Activated T-helper 2 cell treated with anti-CD3 and anti-CD28 coated beads, Interferon-gamma antibody, Interleukin-2, Interleukin-4, amounts not matched to agents 10 μg/mL and 5 μg/mL and 100 μg/mL, durations not matched to agents 14 hours and 24 hours and 36 hours (primary cell): ENCODE measurements at regions of chr1 and their contacts with region 1.

Region 1: DNA sequence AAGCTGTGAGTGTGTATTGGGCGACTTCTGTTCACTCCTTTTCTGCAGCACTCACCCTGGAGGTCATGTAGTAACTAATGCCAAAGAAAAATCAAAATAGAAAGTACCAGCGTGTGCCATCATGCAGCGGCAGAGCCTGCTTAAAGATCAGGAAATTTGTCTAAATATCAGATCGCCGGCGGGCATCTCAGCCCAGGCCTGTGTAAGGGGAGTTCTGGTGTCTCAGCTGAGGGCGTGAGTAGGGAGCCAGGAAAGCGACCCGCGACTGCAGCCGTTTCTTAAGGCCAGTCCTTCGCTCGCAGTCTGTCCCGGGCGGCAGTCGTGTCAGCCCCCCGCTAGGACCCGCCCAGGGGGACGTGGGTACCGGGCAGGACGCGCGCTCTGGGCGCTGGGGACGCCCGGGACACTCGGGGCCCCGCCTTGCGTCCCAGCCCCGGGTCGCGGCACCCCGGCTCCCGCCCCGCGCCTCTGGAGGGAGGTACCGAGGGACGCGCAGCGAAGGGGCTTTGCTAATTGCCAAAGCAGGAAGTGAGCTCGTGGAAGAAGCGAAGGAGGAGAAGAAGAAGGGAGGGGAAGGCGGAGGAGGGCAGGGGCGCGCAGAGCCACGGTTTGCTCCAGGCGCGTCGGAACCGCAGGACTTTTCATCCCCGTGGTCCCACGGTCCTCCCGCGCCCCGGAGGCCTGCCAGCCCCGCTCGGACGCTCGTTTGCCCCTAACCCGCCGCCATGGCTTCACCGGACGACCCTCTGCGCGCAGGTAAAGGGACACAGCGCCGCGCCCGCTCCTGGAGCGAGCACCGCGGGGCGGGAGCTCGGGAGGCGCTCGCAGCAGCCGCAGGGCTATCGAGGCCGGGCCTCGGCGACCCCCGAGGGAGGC is 1.1 kb downstream of the EDARADD start:
- DNase-seq: peak; percentile 64
- H3K4me3 Mint-ChIP-seq: peak overlapping the region; percentile 84
- H3K27ac Mint-ChIP-seq: peak overlapping the region; percentile 79
- H3K4me1 Mint-ChIP-seq: peaks cover 57% of the 10 kb centered on the region
- H3K27me3 Mint-ChIP-seq: peaks cover 11% of the 10 kb centered on the region

Region 2: GRCh38 chr1:235642011-235642942 is 752.9 kb before region 1 on chr1:
- intact Hi-C with region 1: loop called (anchors 1 kb)
- DNase-seq: peak; percentile 75
- H3K4me3 Mint-ChIP-seq: peak overlapping the region; percentile 65
- H3K27ac Mint-ChIP-seq: peak overlapping the region; percentile 95
- H3K4me1 Mint-ChIP-seq: peaks cover 73% of the 10 kb centered on the region
- H3K27me3 Mint-ChIP-seq: peaks cover 11% of the 10 kb centered on the region

Region 3: GRCh38 chr1:236120721-236121153 is 274.4 kb before region 1 on chr1:
- intact Hi-C with region 1: loop called (anchors 1 kb)
- DNase-seq: no peak
- H3K4me3 Mint-ChIP-seq: peak overlapping the region; percentile 45
- H3K27ac Mint-ChIP-seq: peak overlapping the region; percentile 29
- H3K4me1 Mint-ChIP-seq: peaks cover 29% of the 10 kb centered on the region
- H3K27me3 Mint-ChIP-seq: peaks cover 19% of the 10 kb centered on the region

Region 4: DNA sequence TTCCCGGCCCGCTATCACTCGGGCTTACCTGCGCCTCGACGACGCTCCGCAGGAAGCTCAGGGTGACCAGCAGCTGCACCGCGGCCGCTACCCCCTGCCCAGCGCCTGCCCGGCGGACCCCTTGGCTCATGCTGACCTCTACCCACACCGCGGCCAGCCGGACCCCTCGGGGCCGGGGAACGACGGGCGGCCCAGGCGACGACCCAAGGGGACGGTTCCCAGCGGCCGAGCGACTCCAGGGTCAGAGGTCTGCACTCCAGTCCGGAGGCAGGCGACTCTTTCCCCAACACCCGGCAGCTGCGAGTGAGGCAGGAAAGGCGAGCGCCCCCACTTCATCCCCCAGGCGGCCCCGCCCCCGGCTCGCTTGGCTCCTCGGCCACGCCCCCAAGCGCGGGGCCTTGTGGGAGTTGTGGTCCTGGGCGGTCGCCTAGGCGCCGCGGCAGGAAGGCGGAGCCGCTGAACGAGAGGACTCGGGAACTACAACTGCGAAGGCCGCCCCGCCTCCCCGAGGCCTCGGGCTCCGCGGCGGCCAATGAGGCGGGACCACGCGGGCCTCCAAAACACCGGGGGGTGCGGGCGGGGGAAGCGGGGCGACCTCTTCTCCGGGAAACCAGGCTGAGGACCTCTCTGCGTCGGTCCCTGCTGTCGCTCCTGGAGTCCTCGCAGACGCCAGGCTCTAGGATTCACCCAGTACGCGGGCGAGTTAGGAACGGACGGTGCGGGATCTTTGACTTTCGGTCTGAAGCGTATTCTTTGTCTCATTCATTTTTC is 113.3 kb before region 1 on chr1 and contains the start of gene ERO1B:
- intact Hi-C with region 1: loop called (anchors 1 kb)
- DNase-seq: peak; percentile 96
- H3K4me3 Mint-ChIP-seq: peak within 1 kb of the TSS; percentile 83
- H3K27ac Mint-ChIP-seq: peak within 1 kb of the TSS; percentile 53
- H3K4me1 Mint-ChIP-seq: peaks cover 34% of the 10 kb centered on the region
- H3K27me3 Mint-ChIP-seq: peaks cover 22% of the 10 kb centered on the region
- total RNA-seq, gene ERO1B: 2.4 and 3.2 TPM in 2 replicates

Region 5: GRCh38 chr1:236421022-236421421 is 25.9 kb after region 1 on chr1:
- intact Hi-C with region 1: loop called (anchors 1 kb)
- DNase-seq: no peak
- H3K4me3 Mint-ChIP-seq: no peak overlapping the region
- H3K27ac Mint-ChIP-seq: no peak overlapping the region
- H3K4me1 Mint-ChIP-seq: peaks cover 23% of the 10 kb centered on the region
- H3K27me3 Mint-ChIP-seq: no peaks in the 10 kb centered on the region

Region 6: DNA sequence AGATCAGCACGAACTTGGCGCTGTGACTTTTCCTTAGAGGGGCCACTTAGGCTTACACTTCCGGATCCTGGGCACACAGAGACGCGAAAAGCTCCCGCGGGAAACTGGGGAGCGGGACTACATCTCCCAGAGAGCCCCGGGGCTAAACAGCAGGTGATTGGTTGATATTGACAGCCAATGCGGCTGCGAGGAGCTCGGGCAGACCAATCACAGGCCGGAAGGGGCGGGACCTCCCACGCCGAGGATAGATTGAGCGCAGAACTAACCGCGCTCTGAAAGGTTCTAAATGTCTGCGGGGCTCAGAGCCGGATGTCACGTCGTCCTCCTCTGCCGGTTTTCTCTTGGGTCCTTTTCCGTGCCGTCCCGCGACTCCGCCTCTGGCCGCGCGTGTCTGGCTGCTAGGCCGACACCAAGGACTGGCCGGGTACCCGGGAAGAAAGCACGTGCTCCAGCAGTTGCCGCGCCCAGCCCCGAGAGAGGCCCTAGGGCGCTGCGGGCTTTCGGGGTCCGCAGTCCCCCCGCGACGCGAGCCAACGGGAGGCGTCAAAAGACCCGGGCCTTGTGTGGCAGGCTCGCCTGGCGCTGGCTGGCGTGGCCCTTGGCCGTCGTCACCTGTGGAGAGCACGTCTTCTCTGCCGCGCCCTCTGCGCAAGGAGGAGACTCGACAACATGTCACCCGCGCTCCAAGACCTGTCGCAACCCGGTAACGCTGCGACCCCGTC is 400.1 kb after region 1 on chr1 and contains the start of gene MTR:
- intact Hi-C with region 1: loop called (anchors 10 kb)
- DNase-seq: peak; percentile 94
- H3K4me3 Mint-ChIP-seq: peak within 1 kb of the TSS; percentile 92
- H3K27ac Mint-ChIP-seq: peak within 1 kb of the TSS; percentile 98
- H3K4me1 Mint-ChIP-seq: peaks cover 32% of the 10 kb centered on the region
- H3K27me3 Mint-ChIP-seq: peaks cover 10% of the 10 kb centered on the region
- total RNA-seq, gene MTR: 59.2 and 62.2 TPM in 2 replicates